K562 (cell line): ENCODE measurements at regions of chr4 and their contacts with region 1.

Region 1: DNA sequence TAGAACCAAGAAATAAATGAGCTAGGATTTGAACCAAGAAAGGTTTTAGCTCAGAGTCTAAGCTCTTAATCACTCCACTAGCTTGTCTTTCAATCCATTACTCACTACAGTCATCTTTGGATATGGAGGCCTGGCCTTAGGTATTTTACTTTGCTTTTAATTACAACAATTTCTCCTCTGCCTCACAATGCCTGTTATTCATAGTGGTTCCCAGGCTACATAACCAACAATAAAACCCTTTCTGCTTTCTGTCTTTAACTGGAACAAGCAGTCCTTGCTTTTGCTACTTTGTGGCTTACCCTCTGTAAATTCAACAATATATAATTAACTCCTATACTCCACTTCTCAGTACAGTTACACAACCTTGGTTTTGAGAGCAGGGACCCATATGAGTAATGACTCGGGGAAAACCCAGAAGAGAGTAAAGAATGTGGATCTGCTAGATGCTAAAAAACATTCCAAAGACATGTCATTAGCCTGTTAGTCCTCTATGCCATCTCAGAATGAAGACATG is 94.7 kb upstream of the NAP1L5 start:
- DNase-seq: no peak
- ATAC-seq: no peak; the same call in 2 of the 3 replicates
- H3K4me3 ChIP-seq: no peak overlapping the region
- H3K27ac ChIP-seq: no peak overlapping the region
- H3K4me1 ChIP-seq: no peaks in the 10 kb centered on the region
- H3K27me3 ChIP-seq: no peaks in the 10 kb centered on the region
- CTCF ChIP-seq: no peak
- EP300 ChIP-seq: no peak
- POLR2A ChIP-seq: no peak
- RAD21 ChIP-seq: no peak

Region 2: GRCh38 chr4:88672987-88673386 is 119.3 kb before region 1 on chr4:
- CTCF ChIA-PET with region 1: interaction called, 3 read pairs
- POLR2A ChIA-PET with region 1: no interaction called
- in situ Hi-C with region 1: no loop called
- intact Hi-C with region 1: loop called (anchors 10 kb)
- DNase-seq: peak; percentile 15 to 66 (median 31)
- ATAC-seq: peak; percentile 98
- H3K4me3 ChIP-seq: no peak overlapping the region
- H3K27ac ChIP-seq: no peak overlapping the region
- H3K4me1 ChIP-seq: peaks cover 0 to 2% of the 10 kb centered on the region in 2 experiments; a peak in 1 of 5 replicates
- H3K27me3 ChIP-seq: no peaks in the 10 kb centered on the region
- CTCF ChIP-seq: peak; percentile 44 to 74 (median 73)
- EP300 ChIP-seq: no peak
- POLR2A ChIP-seq: no peak
- RAD21 ChIP-seq: peak; percentile 28 to 53; a peak in 3 of 4 replicates

Region 3: DNA sequence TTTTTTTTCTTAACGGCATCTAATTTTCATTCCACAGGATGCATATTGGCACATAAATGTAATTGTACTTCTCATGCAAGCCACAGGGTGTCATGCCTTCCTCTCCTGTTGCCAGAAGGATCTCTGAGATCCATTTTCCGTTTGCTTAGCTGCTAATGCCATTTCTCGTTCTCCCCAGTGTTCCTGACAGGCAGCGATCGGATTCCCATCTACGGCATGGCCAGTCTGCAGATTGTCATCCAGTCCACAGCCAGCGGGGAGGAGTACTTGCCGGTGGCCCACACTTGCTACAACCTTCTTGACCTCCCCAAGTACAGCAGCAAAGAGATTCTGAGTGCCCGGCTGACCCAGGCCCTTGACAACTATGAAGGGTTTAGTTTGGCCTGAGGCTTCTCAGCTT is 85.8 kb before region 1 on chr4:
- CTCF ChIA-PET with region 1: no interaction called
- POLR2A ChIA-PET with region 1: no interaction called
- in situ Hi-C with region 1: no loop called
- intact Hi-C with region 1: loop called (anchors 5 kb)
- DNase-seq: peak in 1 of 4 experiments; percentile 30
- ATAC-seq: peak; percentile 75; the same call in 2 of the 3 replicates
- H3K4me3 ChIP-seq: no peak overlapping the region
- H3K27ac ChIP-seq: no peak overlapping the region
- H3K4me1 ChIP-seq: no peaks in the 10 kb centered on the region; a peak in 1 of 5 replicates
- H3K27me3 ChIP-seq: no peaks in the 10 kb centered on the region
- CTCF ChIP-seq: peak; percentile 43 to 53 (median 48); a peak in 4 of 6 replicates
- EP300 ChIP-seq: no peak
- POLR2A ChIP-seq: no peak
- RAD21 ChIP-seq: peak in 1 of 2 experiments; percentile 45; a peak in 2 of 4 replicates